ENCODE measurements at regions of chr17 and their contacts with region 1.

Region 1: GRCh38 chr17:79991140-79991923 is 44.3 kb downstream of the TBC1D16 start:
- DNase-seq: peak; percentile 92

Region 2: GRCh38 chr17:79702034-79702433 is 289.3 kb before region 1 on chr17:
- intact Hi-C with region 1: no loop called
- DNase-seq: no peak

Region 3: DNA sequence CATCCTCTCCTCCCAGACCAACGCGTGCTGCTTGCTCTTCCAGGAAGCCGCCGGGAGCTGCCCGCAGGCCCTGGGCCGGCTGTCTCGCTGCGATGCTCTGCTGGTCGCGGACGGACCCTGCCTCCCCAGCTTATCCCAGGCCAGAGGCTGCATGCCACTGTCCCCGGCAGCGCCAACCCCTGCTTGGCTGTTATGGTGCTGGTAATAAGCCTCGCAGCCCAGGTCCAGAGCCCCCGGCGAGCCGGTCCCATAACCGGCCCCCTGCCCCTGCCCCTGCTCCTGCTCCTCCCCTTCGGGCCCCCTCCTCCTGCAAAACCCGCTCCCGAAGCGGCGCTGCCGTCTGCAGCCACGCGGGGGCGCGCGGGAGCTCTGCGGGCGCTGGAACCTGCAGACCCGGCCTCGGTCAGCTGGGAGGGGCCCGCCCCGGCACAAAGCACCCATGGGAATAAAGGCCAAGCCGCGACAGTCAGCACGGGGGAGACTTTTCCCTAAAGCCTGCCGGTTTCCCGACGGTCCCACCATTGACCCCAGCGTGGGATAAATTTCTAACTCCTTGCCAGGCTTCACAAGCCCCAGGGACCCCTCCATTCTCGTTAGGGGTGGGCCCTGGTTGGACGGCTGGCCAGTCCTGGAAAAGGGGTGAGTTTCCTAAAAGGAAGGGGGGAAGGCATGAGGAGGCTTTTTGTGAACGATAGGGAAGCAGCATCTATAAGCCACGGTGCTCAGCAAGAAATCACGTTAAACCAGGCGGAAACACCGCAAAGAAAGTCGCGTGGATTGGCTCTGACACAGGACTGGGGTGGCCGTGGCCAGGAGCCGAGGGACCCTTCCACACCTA is 249.4 kb before region 1 on chr17:
- intact Hi-C with region 1: loop called (anchors 10 kb)
- DNase-seq: peak; percentile 92

Region 4: GRCh38 chr17:79789534-79790353 is 201.6 kb before region 1 on chr17:
- intact Hi-C with region 1: loop called in 1 of 2 experiments (anchors 5 kb)
- DNase-seq: no peak

Region 5: DNA sequence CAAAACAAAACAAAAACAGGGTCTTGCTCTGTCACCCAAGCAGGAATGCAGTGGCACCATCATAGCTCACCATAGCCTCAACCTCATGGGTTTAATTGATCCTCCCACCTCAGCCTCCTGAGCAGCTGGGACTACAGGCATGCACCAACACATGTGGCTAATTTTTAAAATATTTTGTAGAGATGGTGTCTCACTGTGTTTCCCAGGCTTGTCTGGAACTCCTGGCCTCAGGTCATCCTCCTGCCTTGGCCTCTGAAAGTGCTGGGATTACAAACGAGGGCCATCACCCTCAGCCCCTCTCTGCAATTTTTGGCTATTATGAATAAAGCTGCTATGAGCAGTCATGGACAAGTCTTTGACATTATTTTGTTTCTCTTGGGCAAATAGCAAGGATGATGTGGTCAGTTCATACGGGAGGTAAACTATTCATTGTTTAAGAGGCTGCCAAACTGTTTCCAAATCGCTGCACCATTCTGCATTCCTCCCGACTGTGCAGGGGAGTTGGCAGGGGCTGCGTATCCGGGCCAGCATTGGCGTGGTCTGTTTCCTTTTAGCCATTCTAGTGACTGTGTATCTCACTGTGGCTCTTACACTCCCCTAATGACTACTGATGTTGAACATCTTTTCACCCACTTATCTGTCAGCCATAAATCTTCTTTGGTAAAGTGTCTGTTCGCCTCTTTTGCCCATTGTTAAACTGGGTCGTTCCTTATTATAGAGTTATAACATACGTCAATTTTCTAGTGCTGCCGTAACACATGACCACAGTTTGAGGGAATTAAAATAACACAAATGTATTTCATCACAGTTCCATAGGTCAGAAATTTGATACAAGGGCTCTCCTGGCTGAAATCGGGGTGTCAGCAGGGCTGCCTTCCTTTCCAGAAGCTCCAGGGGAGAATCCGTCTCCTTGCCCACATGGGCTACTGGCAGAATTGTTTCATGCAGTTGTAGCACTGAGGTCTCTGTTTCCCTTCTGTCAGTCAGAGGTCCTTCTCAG is 134.7 kb after region 1 on chr17:
- intact Hi-C with region 1: no loop called
- DNase-seq: peak; percentile 66